Ovary (tissue), 10 donors: ENCODE measurements at regions of chr10 and their contacts with region 1.

Region 1: DNA sequence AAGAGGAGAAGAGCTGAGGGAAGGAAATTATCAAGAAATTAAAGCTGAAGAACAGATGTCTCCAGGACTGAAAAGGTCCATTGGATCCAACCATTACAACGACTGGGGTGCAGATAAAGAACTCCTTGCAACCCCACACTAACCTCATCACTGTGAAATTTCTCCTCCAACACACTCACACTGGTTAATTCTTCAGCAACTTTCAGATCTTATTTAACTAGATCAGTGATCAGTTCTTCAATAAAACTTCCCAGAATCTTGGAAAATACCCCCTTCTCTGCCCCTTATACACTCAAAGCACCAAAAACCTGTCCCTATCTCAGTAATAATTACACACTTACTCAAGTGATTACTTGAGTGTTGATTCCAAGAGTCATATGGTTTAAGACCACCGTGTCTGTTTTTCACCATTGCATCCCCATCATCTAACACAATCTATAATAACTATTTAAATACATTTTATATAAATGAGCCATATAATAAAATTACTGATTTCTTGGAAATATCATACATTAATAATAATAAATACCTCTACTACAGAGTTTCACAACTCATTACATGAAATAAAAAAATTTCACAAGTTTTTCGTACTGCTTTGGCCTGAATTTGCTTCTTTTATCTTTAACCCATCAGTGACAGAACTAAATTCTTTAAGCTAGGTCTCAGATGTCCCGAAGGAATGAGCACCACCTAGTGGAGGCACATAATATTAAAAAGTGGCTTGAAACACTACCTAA is 123.7 kb downstream of the MPP7 start:
- DNase-seq: peak in 1 of 5 donors; percentile 38
- H3K4me3 ChIP-seq: no peak overlapping the region
- H3K27ac ChIP-seq: peak overlapping the region in 1 of 2 donors; percentile 51
- H3K4me1 ChIP-seq: no peaks in the 10 kb centered on the region
- H3K27me3 ChIP-seq: no peaks in the 10 kb centered on the region
- CTCF ChIP-seq: peak; percentile 65 to 88 (median 76)
- EP300 ChIP-seq: no peak
- POLR2A ChIP-seq: no peak

Region 2: GRCh38 chr10:27558612-27559020 is 620.6 kb before region 1 on chr10:
- intact Hi-C with region 1: loop called in 3 of 4 experiments (anchors 5 to 10 kb)
- DNase-seq: peak; percentile 51 to 70 (median 60)
- H3K4me3 ChIP-seq: no peak overlapping the region
- H3K27ac ChIP-seq: no peak overlapping the region
- H3K4me1 ChIP-seq: no peaks in the 10 kb centered on the region
- H3K27me3 ChIP-seq: no peaks in the 10 kb centered on the region
- CTCF ChIP-seq: peak; percentile 68 to 76 (median 73)
- EP300 ChIP-seq: no peak
- POLR2A ChIP-seq: no peak

Region 3: GRCh38 chr10:27568196-27569175 is 610.7 kb before region 1 on chr10:
- intact Hi-C with region 1: loop called in 1 of 4 experiments (anchors 10 kb)
- DNase-seq: no peak
- H3K4me3 ChIP-seq: no peak overlapping the region
- H3K27ac ChIP-seq: no peak overlapping the region
- H3K4me1 ChIP-seq: no peaks in the 10 kb centered on the region
- H3K27me3 ChIP-seq: no peaks in the 10 kb centered on the region
- CTCF ChIP-seq: no peak
- EP300 ChIP-seq: no peak
- POLR2A ChIP-seq: no peak

Region 4: DNA sequence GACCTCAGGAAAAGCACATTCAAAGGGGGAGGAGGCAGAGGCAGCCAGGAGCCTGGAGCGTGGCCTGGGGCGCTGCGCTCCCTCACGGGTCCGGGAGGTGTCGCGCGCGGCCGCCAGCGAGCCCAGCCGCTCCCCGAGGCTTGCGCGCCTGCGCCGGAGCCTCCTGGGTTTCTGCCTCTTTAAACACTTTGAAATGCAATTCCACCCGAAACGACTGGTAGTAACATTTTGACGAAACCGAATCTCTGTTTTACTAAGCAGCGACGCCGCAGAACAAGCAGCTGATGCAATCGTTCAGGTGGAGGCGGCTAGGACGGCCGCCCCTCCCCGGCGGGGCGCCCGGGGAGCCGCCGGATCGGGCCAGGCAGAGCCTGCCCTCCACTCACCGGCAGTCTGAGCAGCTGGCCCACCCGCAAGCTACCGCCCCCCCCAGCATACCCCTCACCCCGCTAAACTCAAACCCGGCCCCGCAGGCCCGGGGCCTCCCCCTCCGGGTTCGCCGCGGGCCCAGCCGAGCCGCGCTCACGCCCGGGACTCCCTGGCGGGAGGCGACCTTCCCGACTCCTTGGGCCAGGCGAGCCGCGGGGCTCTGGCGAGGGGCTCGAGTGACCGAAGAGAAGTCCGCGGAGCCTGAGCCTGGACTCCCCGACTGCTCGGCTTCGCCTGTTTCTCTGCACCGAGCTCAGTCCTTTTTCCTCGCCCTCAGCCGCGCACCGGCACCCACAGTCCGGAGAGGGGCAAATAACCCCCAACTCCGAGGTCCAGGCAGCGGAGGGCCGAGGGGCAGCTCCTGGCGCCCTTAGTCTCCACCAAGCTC is 436.8 kb before region 1 on chr10:
- intact Hi-C with region 1: loop called in 3 of 4 experiments (anchors 1 to 10 kb)
- DNase-seq: peak; percentile 82 to 92 (median 87)
- H3K4me3 ChIP-seq: peak overlapping the region; percentile 75
- H3K27ac ChIP-seq: peak overlapping the region; percentile 96 to 98
- H3K4me1 ChIP-seq: no peaks in the 10 kb centered on the region
- H3K27me3 ChIP-seq: no peaks in the 10 kb centered on the region
- CTCF ChIP-seq: peak; percentile 81 to 84 (median 83)
- EP300 ChIP-seq: no peak
- POLR2A ChIP-seq: peak; percentile 69

Region 5: GRCh38 chr10:28241741-28242399 is 62.7 kb after region 1 on chr10:
- intact Hi-C with region 1: loop called in 1 of 4 experiments (anchors 10 kb)
- DNase-seq: peak in 1 of 5 donors; percentile 46
- H3K4me3 ChIP-seq: no peak overlapping the region
- H3K27ac ChIP-seq: no peak overlapping the region
- H3K4me1 ChIP-seq: no peaks in the 10 kb centered on the region
- H3K27me3 ChIP-seq: no peaks in the 10 kb centered on the region
- CTCF ChIP-seq: peak; percentile 89 to 92 (median 91)
- EP300 ChIP-seq: no peak
- POLR2A ChIP-seq: no peak